SK-N-SH (cell line): ENCODE measurements at regions of chrX and their contacts with region 1.

Region 1: DNA sequence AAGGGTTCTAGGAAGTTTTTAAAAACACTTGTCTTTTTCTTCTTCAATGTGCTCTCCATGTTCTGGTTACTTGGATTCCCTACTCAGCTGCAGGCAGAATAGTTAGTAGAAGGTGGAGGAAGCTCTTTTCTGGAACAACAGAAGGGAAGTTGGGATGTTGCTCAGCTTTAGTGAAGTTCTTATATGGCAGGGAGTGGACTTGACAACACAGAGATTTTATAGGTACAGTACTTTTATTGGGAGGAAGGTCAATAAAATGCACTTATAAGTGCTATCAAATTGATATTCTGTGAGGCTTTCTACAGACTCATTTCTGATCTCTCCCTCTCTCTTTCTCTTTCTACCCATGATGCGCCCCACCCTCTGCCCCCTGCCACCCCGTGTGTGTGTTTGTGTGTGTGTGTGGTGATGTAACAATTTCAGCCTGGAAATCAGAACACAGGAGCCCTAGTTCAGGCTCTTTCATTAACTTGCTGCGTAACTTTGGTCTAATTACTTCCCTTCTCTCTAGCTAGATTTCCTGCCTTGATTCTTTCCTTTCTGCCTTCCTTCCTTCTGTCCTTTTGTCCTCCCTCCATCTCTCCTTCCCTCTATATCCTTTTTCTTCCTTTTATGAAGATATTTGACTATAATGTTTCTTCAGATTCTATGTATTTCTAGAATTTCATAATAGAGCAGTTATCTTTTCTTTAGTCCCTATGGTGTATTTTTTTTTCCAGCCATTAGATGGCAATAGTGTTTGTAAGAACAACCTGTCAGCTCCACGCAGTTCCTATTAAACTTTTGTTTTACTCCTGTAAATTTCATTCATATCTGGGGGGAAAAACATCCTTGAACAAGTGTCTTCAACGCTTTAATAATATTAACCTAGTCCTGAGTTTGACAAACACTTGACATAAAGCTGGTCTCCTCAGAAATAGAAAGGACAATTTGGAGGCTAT is 37.1 kb downstream of the HEPH start:
- DNase-seq: no peak
- H3K4me3 ChIP-seq: no peak overlapping the region
- H3K27ac ChIP-seq: no peak overlapping the region
- H3K4me1 ChIP-seq: no peaks in the 10 kb centered on the region
- H3K27me3 ChIP-seq: no peaks in the 10 kb centered on the region
- CTCF ChIP-seq: peak; percentile 66
- EP300 ChIP-seq: no peak
- RAD21 ChIP-seq: peak; percentile 45

Region 2: DNA sequence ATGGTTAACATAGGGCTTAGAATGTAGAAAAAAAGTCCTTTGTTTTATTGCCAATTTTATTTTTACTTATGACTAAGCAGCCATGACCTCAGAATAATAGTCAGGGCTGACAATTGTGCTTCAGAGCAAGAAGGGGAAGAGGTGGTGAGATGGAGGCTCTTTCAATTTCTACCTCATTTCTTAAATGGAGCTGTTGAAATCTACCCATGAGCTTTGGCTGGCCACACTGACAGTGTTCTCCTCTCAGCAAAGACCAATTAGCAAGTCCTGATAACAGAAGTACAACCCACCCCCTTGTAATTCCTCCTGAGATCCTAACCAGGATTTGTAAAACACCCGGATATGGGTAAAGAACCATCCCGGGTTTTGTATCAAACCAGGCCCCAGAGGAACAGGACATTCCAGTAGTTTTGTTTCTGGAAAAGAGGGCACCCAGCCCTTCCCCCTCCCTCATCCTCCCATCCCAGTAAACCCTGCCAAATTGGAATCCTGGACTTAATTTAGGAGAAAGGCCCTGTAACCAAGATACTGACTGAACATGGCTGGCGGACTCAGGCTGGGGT is 37.2 kb before region 1 on chrX and contains the start of gene HEPH:
- CTCF ChIA-PET with region 1: no interaction called
- POLR2A ChIA-PET with region 1: no interaction called
- DNase-seq: no peak
- H3K4me3 ChIP-seq: peak within 1 kb of the TSS; percentile 25 to 46; a peak in 3 of 4 replicates
- H3K27ac ChIP-seq: no peak within 1 kb of the TSS
- H3K4me1 ChIP-seq: no peaks in the 10 kb centered on the region
- H3K27me3 ChIP-seq: no peaks in the 10 kb centered on the region
- CTCF ChIP-seq: no peak
- EP300 ChIP-seq: no peak
- RAD21 ChIP-seq: no peak
- polyA plus RNA-seq, gene HEPH: 8.6 and 11.5 TPM in 2 replicates

Region 3: DNA sequence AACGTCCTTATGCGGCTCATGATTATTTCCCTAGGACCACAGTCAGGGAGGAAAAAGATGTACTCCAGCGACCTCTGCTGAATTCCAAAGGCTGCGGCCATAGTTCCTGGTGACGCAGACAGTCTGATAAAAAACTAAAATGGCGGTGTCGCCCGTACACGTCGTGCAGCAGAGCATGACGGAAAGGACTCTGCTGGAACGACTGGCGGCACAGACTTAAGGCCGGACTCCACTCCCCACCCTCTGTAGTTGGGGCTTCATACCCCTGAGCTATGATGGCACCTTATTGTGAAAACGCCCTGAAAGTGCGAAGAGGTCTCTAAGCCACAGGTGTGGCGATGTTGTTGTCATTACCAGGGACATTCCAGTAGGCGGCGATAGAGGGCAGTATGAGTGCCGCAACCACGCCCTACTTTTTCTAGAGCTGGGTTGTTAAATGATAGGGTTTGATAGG is 527.7 kb after region 1 on chrX:
- CTCF ChIA-PET with region 1: interaction called, 13 read pairs
- POLR2A ChIA-PET with region 1: no interaction called
- DNase-seq: peak; percentile 35
- H3K4me3 ChIP-seq: peak overlapping the region; percentile 35 to 52; a peak in 3 of 4 replicates
- H3K27ac ChIP-seq: no peak overlapping the region
- H3K4me1 ChIP-seq: no peaks in the 10 kb centered on the region; a peak in 1 of 4 replicates
- H3K27me3 ChIP-seq: no peaks in the 10 kb centered on the region
- CTCF ChIP-seq: peak; percentile 70
- EP300 ChIP-seq: no peak
- RAD21 ChIP-seq: peak; percentile 33